PC-9 (cell line): ENCODE measurements at regions of chr9 and their contacts with region 1.

Region 1: DNA sequence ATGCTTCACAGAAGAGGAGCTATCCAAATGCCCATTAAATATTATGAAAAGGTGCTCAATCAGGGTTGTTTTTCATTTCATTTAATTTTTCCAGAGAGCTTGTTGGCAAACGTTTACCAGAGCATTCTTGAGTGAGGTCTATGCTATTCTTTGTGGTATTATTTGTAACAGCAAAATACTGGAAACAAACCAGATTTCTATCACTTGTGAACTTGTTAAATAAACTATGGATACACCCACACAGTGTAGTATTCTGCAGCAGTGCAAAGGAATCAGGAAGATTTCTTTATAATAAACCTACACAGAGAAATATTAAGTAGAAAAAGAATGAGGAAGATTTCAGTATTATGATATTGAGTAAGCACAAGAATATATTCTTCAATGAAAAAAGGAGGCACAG is 15.0 kb upstream of the SLC1A1 start:
- DNase-seq: no peak
- H3K4me3 ChIP-seq: no peak overlapping the region
- H3K27ac ChIP-seq: no peak overlapping the region
- H3K4me1 ChIP-seq: no peaks in the 10 kb centered on the region
- H3K27me3 ChIP-seq: no peaks in the 10 kb centered on the region
- CTCF ChIP-seq: no peak

Region 2: DNA sequence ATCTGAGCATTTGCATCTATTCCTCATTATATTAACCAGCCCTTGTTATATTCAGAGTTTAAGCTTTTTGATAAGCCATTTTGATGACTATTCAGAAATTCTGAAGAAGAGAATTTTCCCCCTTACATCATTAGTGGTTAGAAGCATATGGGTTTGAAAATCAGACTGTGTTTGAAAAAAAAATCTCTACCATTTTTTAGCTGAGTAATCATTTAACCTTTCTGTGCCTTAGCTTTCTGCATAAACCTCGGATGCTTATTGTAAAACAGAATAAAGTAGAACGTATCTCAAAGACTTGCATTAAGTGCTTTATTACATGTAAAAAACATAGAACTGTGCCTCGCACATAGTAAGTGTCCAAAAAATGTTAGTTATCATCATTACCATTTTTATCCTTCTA is 1228.1 kb before region 1 on chr9:
- CTCF ChIA-PET with region 1: interaction called, 15 read pairs
- POLR2A ChIA-PET with region 1: no interaction called
- intact Hi-C with region 1: no loop called
- DNase-seq: no peak
- H3K4me3 ChIP-seq: no peak overlapping the region
- H3K27ac ChIP-seq: no peak overlapping the region
- H3K4me1 ChIP-seq: no peaks in the 10 kb centered on the region
- H3K27me3 ChIP-seq: no peaks in the 10 kb centered on the region
- CTCF ChIP-seq: no peak

Region 3: DNA sequence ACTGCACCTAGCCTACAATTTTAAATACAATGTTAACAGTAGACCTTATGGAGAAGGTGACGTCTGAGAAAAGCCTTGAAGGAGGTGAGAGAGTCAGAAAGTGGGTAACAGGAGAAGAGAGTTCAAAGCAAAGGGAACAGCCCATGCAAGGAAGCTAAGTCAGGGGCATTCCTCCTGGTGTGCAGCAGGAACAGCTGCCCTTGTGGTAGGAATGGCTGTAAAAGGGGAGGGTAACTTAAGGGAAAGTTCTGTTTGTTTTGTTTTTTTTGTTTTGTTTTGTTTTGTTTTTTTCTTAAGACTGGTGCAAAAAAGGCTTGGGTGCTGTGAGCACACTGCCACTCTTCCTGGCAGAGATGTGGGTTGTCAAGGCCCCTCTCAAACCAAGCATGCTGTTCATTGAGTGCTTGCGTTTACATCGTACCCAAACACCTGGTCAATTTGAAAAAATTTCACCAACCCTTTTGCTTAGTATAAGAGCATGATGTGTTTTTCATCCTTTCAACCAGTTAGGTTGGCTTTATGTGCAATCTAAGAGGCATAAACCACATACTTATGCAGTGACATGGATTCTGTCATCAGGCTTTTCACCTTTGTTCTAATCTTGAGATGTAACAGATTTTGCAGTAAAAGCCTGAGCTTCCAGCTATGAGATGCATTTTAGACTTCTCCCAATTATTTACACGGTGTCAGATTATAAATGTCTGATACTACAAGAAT is 455.1 kb before region 1 on chr9:
- CTCF ChIA-PET with region 1: no interaction called
- POLR2A ChIA-PET with region 1: no interaction called
- intact Hi-C with region 1: no loop called
- DNase-seq: peak; percentile 1 to 77
- H3K4me3 ChIP-seq: 0 out of 2 replicates have a peak overlapping the region, but pooled peaks have one; percentile 6
- H3K27ac ChIP-seq: peak overlapping the region; percentile 47; the same call in 1 of the 2 replicates
- H3K4me1 ChIP-seq: peaks cover 38% of the 10 kb centered on the region
- H3K27me3 ChIP-seq: no peaks in the 10 kb centered on the region
- CTCF ChIP-seq: no peak

Region 4: GRCh38 chr9:4620881-4621555 is 145.7 kb after region 1 on chr9:
- CTCF ChIA-PET with region 1: interaction called, 12 read pairs
- POLR2A ChIA-PET with region 1: no interaction called
- intact Hi-C with region 1: no loop called
- DNase-seq: no peak
- H3K4me3 ChIP-seq: no peak overlapping the region
- H3K27ac ChIP-seq: no peak overlapping the region
- H3K4me1 ChIP-seq: peaks cover 19% of the 10 kb centered on the region
- H3K27me3 ChIP-seq: no peaks in the 10 kb centered on the region
- CTCF ChIP-seq: no peak